Panc1 (cell line): ENCODE measurements at regions of chr2 and their contacts with region 1.

Region 1: DNA sequence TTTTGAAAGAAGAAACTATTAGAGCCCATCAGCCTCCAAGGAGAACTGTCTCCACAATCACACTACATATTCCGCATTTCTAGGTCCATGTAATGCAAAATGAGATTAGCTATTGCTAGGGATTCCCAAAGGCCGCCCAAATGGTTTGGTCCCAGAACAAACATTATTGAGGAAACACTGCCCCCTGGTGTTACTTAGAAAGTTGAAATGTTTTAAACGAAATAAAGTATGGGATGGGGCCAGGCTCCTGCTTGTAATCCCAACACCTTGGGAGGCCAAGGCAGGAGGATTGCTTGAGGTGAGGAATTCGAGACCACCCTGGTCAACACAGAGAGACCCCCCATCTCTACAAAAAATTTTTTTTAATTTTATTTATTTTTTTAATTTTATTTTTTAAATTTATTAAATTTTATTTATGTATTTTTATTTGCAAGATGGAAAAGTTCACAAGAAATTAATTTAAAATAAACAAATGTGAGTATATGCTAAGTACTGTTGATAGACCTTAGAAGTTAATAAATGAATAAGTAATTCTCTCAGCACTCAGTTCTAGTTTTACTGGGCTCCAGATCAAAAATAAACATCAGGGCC is 5.5 kb downstream of the NHEJ1 start:
- DNase-seq: peak; percentile 39
- ATAC-seq: peak; percentile 72
- H3K4me3 ChIP-seq: no peak overlapping the region
- H3K27ac ChIP-seq: no peak overlapping the region
- H3K4me1 ChIP-seq: peaks cover 5% of the 10 kb centered on the region
- H3K27me3 ChIP-seq: no peaks in the 10 kb centered on the region
- CTCF ChIP-seq: peak; percentile 59

Region 2: GRCh38 chr2:218852911-218853667 is 302.1 kb before region 1 on chr2:
- CTCF ChIA-PET with region 1: interaction called, 3 read pairs
- POLR2A ChIA-PET with region 1: no interaction called
- in situ Hi-C with region 1: no loop called
- intact Hi-C with region 1: loop called (anchors 10 kb)
- DNase-seq: peak; percentile 38
- ATAC-seq: peak; percentile 62
- H3K4me3 ChIP-seq: no peak overlapping the region
- H3K27ac ChIP-seq: no peak overlapping the region
- H3K4me1 ChIP-seq: peaks cover 17% of the 10 kb centered on the region
- H3K27me3 ChIP-seq: no peaks in the 10 kb centered on the region
- CTCF ChIP-seq: peak; percentile 90

Region 3: GRCh38 chr2:218995972-218996711 is 159.0 kb before region 1 on chr2:
- CTCF ChIA-PET with region 1: interaction called, 4 read pairs
- POLR2A ChIA-PET with region 1: no interaction called
- in situ Hi-C with region 1: no loop called
- intact Hi-C with region 1: loop called (anchors 10 kb)
- DNase-seq: peak; percentile 41
- ATAC-seq: peak; percentile 95
- H3K4me3 ChIP-seq: peak overlapping the region; percentile 51 to 62
- H3K27ac ChIP-seq: peak overlapping the region; percentile 48; the same call in 1 of the 2 replicates
- H3K4me1 ChIP-seq: peaks cover 4% of the 10 kb centered on the region; the same call in 1 of the 2 replicates
- H3K27me3 ChIP-seq: peaks cover 2% of the 10 kb centered on the region; the same call in 1 of the 2 replicates
- CTCF ChIP-seq: peak; percentile 96

Region 4: GRCh38 chr2:219057709-219058540 is 97.2 kb before region 1 on chr2:
- CTCF ChIA-PET with region 1: interaction called, 8 read pairs
- POLR2A ChIA-PET with region 1: interaction called, 3 read pairs
- in situ Hi-C with region 1: no loop called
- intact Hi-C with region 1: loop called (anchors 5 kb)
- DNase-seq: no peak
- ATAC-seq: peak; percentile 84
- H3K4me3 ChIP-seq: peak overlapping the region; percentile 0 to 37; a peak in 3 of 4 replicates
- H3K27ac ChIP-seq: no peak overlapping the region
- H3K4me1 ChIP-seq: peaks cover 21% of the 10 kb centered on the region
- H3K27me3 ChIP-seq: peaks cover 26% of the 10 kb centered on the region
- CTCF ChIP-seq: peak; percentile 97

Region 5: DNA sequence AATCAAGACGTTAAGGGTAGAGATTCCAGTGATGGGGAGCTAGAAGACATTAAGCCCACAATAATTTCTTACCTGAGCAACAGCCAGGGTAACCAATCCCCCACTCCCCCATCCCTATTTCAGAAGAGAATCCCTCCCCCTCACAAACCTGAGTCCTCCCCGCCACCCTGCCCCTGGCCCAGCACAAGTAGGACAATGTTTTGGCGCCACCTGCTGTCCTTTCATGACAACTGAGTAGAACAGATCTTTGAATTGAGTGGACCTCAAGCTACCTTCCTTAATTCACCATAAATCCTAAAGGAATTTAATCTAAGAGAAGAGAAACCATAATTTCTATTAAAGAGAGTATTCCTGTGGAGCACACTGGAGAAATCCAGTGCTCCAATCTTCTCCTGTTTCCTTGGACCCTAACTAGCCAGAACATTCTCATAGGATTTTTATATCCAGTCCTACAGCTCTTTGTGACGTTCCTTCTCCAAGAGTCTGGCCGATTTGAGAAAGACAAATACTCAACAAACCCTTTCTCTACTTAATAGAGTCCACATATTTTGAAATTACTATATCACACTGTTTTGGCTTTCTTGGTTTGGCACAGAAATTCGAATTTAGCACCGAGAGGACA is 35.6 kb before region 1 on chr2:
- CTCF ChIA-PET with region 1: interaction called, 14 read pairs
- POLR2A ChIA-PET with region 1: no interaction called
- in situ Hi-C with region 1: no loop called
- intact Hi-C with region 1: no loop called
- DNase-seq: no peak
- ATAC-seq: peak; percentile 91
- H3K4me3 ChIP-seq: no peak overlapping the region
- H3K27ac ChIP-seq: no peak overlapping the region
- H3K4me1 ChIP-seq: no peaks in the 10 kb centered on the region
- H3K27me3 ChIP-seq: no peaks in the 10 kb centered on the region
- CTCF ChIP-seq: peak; percentile 87